Psoas muscle (tissue), 8 donors: ENCODE measurements at regions of chr12 and their contacts with region 1.

Region 1: GRCh38 chr12:10749700-10750384 is 26.7 kb upstream of the YBX3 start:
- DNase-seq: peak; percentile 48 to 70
- ATAC-seq: peak; percentile 90 to 97 (median 92)
- H3K4me3 ChIP-seq: peak overlapping the region; percentile 56
- H3K27ac ChIP-seq: peak overlapping the region; percentile 56
- H3K4me1 ChIP-seq: peaks cover 10% of the 10 kb centered on the region
- H3K27me3 ChIP-seq: no peaks in the 10 kb centered on the region
- CTCF ChIP-seq: peak; percentile 93

Region 2: GRCh38 chr12:10613349-10614055 is 136.3 kb before region 1 on chr12 and contains the start of gene MAGOHB:
- intact Hi-C with region 1: loop called (anchors 2 to 5 kb)
- DNase-seq: peak; percentile 97 to 98
- ATAC-seq: peak; percentile 99 to 100 (median 99)
- H3K4me3 ChIP-seq: peak within 1 kb of the TSS; percentile 68
- H3K27ac ChIP-seq: peak within 1 kb of the TSS; percentile 78
- H3K4me1 ChIP-seq: peaks cover 6% of the 10 kb centered on the region
- H3K27me3 ChIP-seq: no peaks in the 10 kb centered on the region
- CTCF ChIP-seq: no peak
- total RNA-seq, gene MAGOHB: 4.0 to 8.5 (median 6.4) TPM